A673 (cell line): ENCODE measurements at regions of chr3 and their contacts with region 1.

Region 1: GRCh38 chr3:155404486-155404885 is 111.0 kb upstream of the STRIT1 start:
- DNase-seq: no peak
- H3K4me3 ChIP-seq: no peak overlapping the region
- H3K27ac ChIP-seq: no peak overlapping the region
- H3K4me1 ChIP-seq: no peaks in the 10 kb centered on the region
- H3K27me3 ChIP-seq: no peaks in the 10 kb centered on the region
- CTCF ChIP-seq: no peak

Region 2: GRCh38 chr3:157290766-157291165 is 1886.3 kb after region 1 on chr3:
- CTCF ChIA-PET with region 1: no interaction called
- POLR2A ChIA-PET with region 1: interaction called, 14 read pairs
- intact Hi-C with region 1: no loop called
- DNase-seq: peak; percentile 78
- H3K4me3 ChIP-seq: no peak overlapping the region
- H3K27ac ChIP-seq: peak overlapping the region; percentile 67
- H3K4me1 ChIP-seq: peaks cover 44% of the 10 kb centered on the region
- H3K27me3 ChIP-seq: no peaks in the 10 kb centered on the region
- CTCF ChIP-seq: no peak